Activated CD4-positive, alpha-beta memory T cell treated with anti-CD3 and anti-CD28 coated beads, Interleukin-2, amount 10 ng/mL, durations not matched to agents 7 days and 5 days (primary cell): ENCODE measurements at regions of chr11 and their contacts with region 1.

Region 1: DNA sequence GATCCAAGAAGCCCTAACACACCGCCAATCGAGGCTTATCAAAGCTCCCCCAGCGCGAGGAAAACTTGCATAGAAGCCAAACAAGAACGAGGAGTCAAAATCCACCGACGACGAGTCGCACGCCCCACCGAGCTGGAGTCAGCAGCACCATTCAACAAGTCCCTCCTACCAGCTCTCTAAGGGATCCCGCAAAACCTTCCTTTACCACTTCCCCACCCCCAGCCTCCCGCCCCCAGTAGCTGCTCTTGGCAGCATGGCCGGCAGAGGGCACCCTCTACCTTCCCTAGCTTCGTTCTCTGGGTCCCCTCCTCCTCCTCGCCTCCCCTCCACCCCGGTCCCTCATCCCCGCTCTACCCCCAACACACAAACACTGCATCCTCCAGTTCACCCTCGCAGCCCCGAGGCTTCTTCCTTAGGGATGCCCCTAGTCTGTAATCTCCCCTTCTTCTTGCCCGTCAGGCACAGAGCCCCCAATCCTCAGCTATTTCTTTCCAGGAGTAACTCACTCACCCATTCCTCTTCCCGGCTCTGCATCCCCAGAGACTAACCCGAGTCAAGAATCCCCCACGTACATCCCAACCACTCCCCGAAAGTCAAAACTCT is 1.3 kb downstream of the BDNF start:
- DNase-seq: peak; percentile 67
- H3K4me3 Mint-ChIP-seq: no peak overlapping the region
- H3K27ac Mint-ChIP-seq: no peak overlapping the region
- H3K4me1 Mint-ChIP-seq: peaks cover 19% of the 10 kb centered on the region
- H3K27me3 Mint-ChIP-seq: peaks cover 65% of the 10 kb centered on the region

Region 2: DNA sequence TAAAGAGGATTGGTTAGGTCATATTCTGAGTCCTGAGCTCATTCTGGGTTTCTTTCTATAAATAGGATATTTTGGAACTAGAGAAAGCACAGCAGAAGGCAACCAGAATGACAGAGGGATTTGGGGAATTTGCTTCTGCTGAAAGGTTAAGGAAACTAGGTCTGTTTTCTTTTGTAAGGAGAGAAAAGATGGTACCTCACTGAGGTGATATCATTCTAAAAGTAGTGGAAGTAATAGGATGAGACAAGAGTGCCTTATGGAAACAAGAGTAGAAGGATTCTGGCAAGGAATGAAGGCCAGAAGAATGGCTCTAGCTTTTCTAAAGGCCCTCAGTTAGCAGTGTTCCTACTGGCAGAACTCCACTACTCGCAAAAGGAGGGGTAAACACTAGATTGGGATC is 28.0 kb after region 1 on chr11:
- CTCF ChIA-PET with region 1: no interaction called
- POLR2A ChIA-PET with region 1: no interaction called
- DNase-seq: no peak
- H3K4me3 Mint-ChIP-seq: no peak overlapping the region
- H3K27ac Mint-ChIP-seq: no peak overlapping the region
- H3K4me1 Mint-ChIP-seq: no peaks in the 10 kb centered on the region
- H3K27me3 Mint-ChIP-seq: peaks cover 13% of the 10 kb centered on the region

Region 3: DNA sequence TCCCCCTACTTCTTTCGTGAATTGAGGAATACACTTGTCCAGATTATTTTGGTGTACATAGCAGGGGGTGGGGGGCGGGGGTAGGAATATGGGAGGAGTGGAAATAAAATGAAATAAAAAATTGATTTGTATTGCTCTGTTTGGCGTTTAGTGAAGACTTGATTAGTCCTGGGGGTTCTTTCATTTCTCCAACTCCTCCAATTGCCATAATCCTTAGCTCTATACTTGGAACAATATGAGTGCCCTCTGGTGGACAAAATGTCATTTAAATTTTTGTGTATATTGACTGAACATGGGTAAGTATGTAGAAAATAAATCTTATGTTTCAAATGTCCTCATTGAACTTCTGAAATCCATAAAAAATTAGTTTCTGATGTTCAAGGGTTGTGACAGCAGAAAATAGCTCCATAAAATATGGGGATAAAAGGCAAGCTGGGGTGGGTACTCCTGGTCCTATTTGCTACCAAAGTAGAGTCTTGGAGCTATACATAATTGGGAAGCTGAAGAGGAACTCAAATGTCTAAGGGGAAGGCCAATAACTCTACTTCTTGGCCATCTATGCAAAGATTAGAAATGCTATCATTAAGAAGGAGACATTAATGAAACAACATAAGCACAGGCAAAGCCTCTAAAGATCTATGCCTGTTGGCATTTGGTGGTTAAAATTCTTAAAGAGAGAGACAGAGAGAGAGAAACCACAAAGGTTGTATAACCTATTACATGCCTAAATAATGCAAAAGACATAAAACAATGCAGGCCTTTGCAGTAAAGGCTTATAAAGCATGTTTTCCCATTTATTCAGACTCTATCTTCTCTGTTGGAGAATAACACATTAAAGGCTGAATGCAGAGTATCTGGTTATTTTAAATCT is 830.8 kb after region 1 on chr11:
- CTCF ChIA-PET with region 1: interaction called, 31 read pairs
- POLR2A ChIA-PET with region 1: no interaction called
- DNase-seq: no peak
- H3K4me3 Mint-ChIP-seq: no peak overlapping the region
- H3K27ac Mint-ChIP-seq: no peak overlapping the region
- H3K4me1 Mint-ChIP-seq: no peaks in the 10 kb centered on the region
- H3K27me3 Mint-ChIP-seq: no peaks in the 10 kb centered on the region